ENCODE measurements at regions of chr1 and their contacts with region 1.

Region 1: GRCh38 chr1:11645670-11646265 is 8.5 kb downstream of the FBXO2 start:
- DNase-seq: peak; percentile 94
- H3K4me3 Mint-ChIP-seq: no peak overlapping the region
- H3K27ac Mint-ChIP-seq: no peak overlapping the region
- H3K4me1 Mint-ChIP-seq: peaks cover 8% of the 10 kb centered on the region
- H3K27me3 Mint-ChIP-seq: peaks cover 16% of the 10 kb centered on the region

Region 2: GRCh38 chr1:11037740-11038182 is 608.0 kb before region 1 on chr1:
- intact Hi-C with region 1: loop called (anchors 1 kb)
- DNase-seq: peak; percentile 96
- H3K4me3 Mint-ChIP-seq: no peak overlapping the region
- H3K27ac Mint-ChIP-seq: no peak overlapping the region
- H3K4me1 Mint-ChIP-seq: peaks cover 7% of the 10 kb centered on the region
- H3K27me3 Mint-ChIP-seq: no peaks in the 10 kb centered on the region

Region 3: GRCh38 chr1:11320153-11320936 is 325.4 kb before region 1 on chr1:
- intact Hi-C with region 1: loop called (anchors 5 kb)
- DNase-seq: peak; percentile 80
- H3K4me3 Mint-ChIP-seq: no peak overlapping the region
- H3K27ac Mint-ChIP-seq: no peak overlapping the region
- H3K4me1 Mint-ChIP-seq: peaks cover 4% of the 10 kb centered on the region
- H3K27me3 Mint-ChIP-seq: no peaks in the 10 kb centered on the region

Region 4: GRCh38 chr1:11335417-11336056 is 310.2 kb before region 1 on chr1:
- intact Hi-C with region 1: loop called (anchors 1 kb)
- DNase-seq: no peak
- H3K4me3 Mint-ChIP-seq: no peak overlapping the region
- H3K27ac Mint-ChIP-seq: no peak overlapping the region
- H3K4me1 Mint-ChIP-seq: peaks cover 2% of the 10 kb centered on the region
- H3K27me3 Mint-ChIP-seq: peaks cover 24% of the 10 kb centered on the region

Region 5: DNA sequence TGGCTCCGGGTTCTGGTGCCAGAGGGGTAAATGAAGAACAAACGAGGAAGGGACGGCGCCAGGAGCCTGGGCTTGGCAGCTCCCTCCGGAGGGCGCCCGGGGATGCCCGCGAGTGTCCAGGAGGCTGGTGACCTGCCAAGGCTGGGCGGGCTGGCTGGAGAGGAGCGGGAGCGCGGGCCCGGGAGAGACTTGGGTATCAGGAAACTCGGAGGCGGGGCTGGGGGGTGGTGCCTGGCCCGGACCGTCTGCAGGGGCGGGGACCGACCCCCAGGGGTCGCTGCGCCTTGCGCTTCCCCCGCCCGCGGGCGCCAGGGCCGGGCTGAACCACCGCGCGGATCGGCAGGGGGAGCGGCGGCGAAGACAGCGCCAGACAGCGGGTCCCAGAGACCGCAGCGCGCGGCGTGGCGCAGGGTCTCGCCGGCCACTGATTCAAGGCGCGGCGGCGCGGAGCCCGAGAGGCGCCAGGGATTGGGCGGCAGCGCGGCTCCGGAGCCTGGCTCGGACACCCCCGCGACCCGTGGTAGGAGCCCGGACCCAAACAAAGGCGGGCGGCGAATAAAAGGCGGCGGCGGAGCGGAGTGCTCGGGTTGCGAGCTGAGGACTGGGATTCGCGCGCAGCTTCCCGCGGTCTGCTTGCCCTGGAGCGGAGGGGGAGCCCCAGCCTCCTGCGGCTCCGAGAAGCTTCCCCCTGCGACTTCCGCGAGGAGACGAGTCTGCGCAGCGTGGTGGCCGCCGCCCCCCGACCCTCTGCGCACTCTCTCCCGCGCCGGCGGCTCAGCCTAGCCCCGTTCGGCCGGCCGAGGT is 167.0 kb before region 1 on chr1 and contains the start of gene DISP3:
- intact Hi-C with region 1: loop called (anchors 1 kb)
- DNase-seq: peak; percentile 91
- H3K4me3 Mint-ChIP-seq: peak within 1 kb of the TSS; percentile 64
- H3K27ac Mint-ChIP-seq: no peak within 1 kb of the TSS
- H3K4me1 Mint-ChIP-seq: peaks cover 6% of the 10 kb centered on the region
- H3K27me3 Mint-ChIP-seq: peaks cover 31% of the 10 kb centered on the region
- total RNA-seq, gene DISP3: 0.23 and 0.31 TPM in 2 replicates

Region 6: DNA sequence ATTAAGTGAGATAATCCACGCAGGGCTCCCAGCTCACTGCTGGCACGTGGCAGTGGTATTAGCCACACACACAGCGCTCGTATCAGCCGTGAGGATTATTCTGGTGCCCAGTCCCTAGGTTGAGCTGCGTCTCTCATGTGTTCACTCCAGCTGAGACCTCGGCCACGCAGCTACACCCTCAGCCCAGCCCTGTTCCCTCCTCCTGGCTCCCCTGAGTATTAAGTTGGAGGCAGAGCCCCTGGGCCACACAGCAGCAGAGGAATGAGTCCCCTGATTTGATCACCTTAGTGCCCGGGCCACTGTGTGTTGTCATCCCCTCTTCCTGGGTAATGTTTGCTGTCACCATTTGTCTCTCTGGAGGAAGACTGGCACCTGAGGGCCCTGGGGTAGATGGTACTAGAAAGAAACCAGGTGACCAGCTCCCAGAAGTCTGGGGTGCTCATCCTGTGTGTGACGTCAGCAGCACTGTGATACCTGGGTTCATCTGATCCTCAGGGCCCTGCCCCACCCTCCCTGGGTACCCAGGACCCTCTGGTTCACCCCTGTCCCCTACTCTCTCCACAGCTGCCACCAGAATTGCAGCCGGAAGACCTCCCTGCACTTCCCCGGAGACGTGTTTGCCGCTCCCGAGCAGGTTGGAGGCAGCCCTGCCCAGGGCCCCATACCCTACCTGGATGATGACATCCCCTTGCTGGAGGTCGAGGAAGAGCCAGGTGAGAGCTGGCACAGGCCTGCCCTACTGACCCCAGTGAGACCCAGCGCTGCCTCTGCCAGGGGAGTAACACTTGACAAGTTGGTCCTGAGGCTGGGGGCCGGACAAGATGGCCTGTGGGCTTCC is 126.8 kb before region 1 on chr1:
- intact Hi-C with region 1: no loop called
- DNase-seq: no peak
- H3K4me3 Mint-ChIP-seq: no peak overlapping the region
- H3K27ac Mint-ChIP-seq: no peak overlapping the region
- H3K4me1 Mint-ChIP-seq: no peaks in the 10 kb centered on the region
- H3K27me3 Mint-ChIP-seq: no peaks in the 10 kb centered on the region

Region 7: GRCh38 chr1:11711490-11711889 is 65.7 kb after region 1 on chr1:
- intact Hi-C with region 1: loop called (anchors 2 kb)
- DNase-seq: no peak
- H3K4me3 Mint-ChIP-seq: no peak overlapping the region
- H3K27ac Mint-ChIP-seq: no peak overlapping the region
- H3K4me1 Mint-ChIP-seq: no peaks in the 10 kb centered on the region
- H3K27me3 Mint-ChIP-seq: peaks cover 3% of the 10 kb centered on the region

Region 8: DNA sequence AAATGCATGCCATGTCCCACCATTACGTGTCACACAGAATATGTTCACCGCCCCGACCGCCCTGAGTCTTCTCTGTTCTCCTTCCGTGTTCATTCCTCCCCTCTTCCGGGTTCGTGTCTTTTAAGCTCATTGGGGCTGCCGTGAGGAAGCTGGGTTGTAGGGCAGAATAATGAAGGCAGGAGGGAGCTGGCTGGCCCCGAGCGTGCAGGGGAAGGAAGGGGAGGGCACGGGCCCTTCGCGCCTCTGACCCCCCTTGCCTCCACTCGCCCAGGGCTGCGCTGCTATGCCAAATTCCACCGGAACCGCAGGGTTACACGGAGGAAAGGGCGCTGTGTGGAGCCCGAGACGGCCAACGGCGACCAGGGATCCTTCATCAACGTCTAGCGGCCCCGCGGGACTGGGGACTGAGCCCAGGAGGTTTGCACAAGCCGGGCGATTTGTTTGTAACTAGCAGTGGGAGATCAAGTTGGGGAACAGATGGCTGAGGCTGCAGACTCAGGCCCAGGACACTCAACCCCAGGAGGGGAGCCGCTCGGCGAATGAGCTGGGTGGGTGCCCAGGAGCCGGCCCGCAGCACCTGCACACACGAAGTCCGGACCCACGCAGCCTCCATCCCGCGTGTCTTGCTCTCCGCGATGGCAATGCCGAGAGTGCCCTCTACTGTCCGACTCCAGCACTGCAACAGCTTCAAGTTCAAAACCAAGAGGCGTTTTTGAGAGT is 73.7 kb after region 1 on chr1:
- intact Hi-C with region 1: loop called (anchors 1 kb)
- DNase-seq: peak; percentile 95
- H3K4me3 Mint-ChIP-seq: peak overlapping the region; percentile 81
- H3K27ac Mint-ChIP-seq: peak overlapping the region; percentile 89
- H3K4me1 Mint-ChIP-seq: peaks cover 10% of the 10 kb centered on the region
- H3K27me3 Mint-ChIP-seq: peaks cover 7% of the 10 kb centered on the region

Measured in activated CD4-positive, alpha-beta T cell treated with anti-CD3 and anti-CD28 coated beads, Interleukin-2, amount 10 ng/mL, durations not matched to agents 24 days and 14 days (primary cell).